Right cardiac atrium (tissue), 5 donors: ENCODE measurements at regions of chr10 and their contacts with region 1.

Region 1: DNA sequence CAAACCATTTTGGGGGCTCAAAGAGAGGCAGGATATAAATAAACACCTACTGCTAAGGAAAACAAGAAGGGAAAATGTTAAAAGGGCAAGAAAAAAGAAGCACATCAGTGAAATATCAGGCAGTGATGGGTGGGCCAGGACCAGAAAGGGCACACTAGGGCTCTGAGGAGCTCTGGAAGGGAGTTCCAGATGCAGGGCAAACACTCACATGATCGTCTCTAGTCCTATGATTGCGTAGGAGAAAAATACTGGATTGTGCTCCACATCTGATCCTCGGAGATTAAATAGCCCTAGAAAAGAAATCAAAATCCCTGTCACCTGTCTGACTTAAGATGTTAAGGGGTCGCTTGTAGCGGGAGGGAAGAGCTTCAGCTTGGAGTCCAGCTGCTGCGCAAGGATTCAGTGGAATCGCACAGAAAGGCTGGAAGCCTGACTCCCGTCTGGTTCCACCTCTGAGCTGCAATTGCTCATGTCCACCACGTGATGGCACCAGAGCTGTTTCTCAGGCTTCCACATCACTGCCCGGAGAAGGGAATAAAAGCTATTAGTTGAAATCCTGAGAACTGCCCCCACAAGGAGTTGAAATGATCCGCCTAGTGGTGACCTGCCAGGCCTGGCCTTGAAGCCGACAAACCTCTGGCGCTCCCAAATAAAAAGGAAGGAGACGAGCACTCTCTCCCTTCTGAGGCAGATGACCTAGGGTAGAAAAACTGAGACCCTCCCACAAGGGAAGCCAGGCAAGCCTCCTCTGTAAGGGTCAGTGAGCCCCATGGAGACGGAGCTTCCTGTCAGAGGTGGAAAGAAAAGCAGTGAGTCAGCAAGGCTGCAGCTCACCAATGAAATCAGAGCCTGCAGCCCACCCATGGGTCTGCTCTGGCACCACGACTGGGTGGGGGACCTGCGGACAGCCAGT is 39.2 kb downstream of the XPNPEP1 start:
- DNase-seq: peak; percentile 76 to 91 (median 85)
- ATAC-seq: peak; percentile 89 to 90
- H3K4me3 ChIP-seq: no peak overlapping the region
- H3K27ac ChIP-seq: peak overlapping the region; percentile 18
- H3K4me1 ChIP-seq: peaks cover 11% of the 10 kb centered on the region
- H3K27me3 ChIP-seq: no peaks in the 10 kb centered on the region

Region 2: GRCh38 chr10:109721453-109722064 is 162.6 kb before region 1 on chr10:
- intact Hi-C with region 1: no loop called
- DNase-seq: no peak
- ATAC-seq: no peak
- H3K4me3 ChIP-seq: no peak overlapping the region
- H3K27ac ChIP-seq: no peak overlapping the region
- H3K4me1 ChIP-seq: no peaks in the 10 kb centered on the region
- H3K27me3 ChIP-seq: no peaks in the 10 kb centered on the region

Region 3: GRCh38 chr10:109956454-109957091 is 72.5 kb after region 1 on chr10:
- intact Hi-C with region 1: loop called in 1 of 4 experiments (anchors 10 kb)
- DNase-seq: no peak
- ATAC-seq: peak; percentile 43 to 50
- H3K4me3 ChIP-seq: no peak overlapping the region
- H3K27ac ChIP-seq: no peak overlapping the region
- H3K4me1 ChIP-seq: no peaks in the 10 kb centered on the region
- H3K27me3 ChIP-seq: no peaks in the 10 kb centered on the region

Region 4: GRCh38 chr10:110088367-110089104 is 204.4 kb after region 1 on chr10:
- intact Hi-C with region 1: no loop called
- DNase-seq: no peak
- ATAC-seq: no peak
- H3K4me3 ChIP-seq: no peak overlapping the region
- H3K27ac ChIP-seq: no peak overlapping the region
- H3K4me1 ChIP-seq: peaks cover 4% of the 10 kb centered on the region
- H3K27me3 ChIP-seq: no peaks in the 10 kb centered on the region

Region 5: GRCh38 chr10:110101464-110102144 is 217.5 kb after region 1 on chr10:
- intact Hi-C with region 1: loop called in 1 of 4 experiments (anchors 10 kb)
- DNase-seq: no peak
- ATAC-seq: no peak
- H3K4me3 ChIP-seq: no peak overlapping the region
- H3K27ac ChIP-seq: no peak overlapping the region
- H3K4me1 ChIP-seq: peaks cover 4% of the 10 kb centered on the region
- H3K27me3 ChIP-seq: no peaks in the 10 kb centered on the region

Region 6: GRCh38 chr10:110129490-110129889 is 245.4 kb after region 1 on chr10:
- intact Hi-C with region 1: loop called in 2 of 4 experiments (anchors 10 kb)
- DNase-seq: no peak
- ATAC-seq: no peak
- H3K4me3 ChIP-seq: no peak overlapping the region
- H3K27ac ChIP-seq: no peak overlapping the region
- H3K4me1 ChIP-seq: no peaks in the 10 kb centered on the region
- H3K27me3 ChIP-seq: no peaks in the 10 kb centered on the region

Region 7: GRCh38 chr10:110203500-110204455 is 319.7 kb after region 1 on chr10:
- intact Hi-C with region 1: no loop called
- DNase-seq: no peak
- ATAC-seq: no peak
- H3K4me3 ChIP-seq: no peak overlapping the region
- H3K27ac ChIP-seq: no peak overlapping the region
- H3K4me1 ChIP-seq: no peaks in the 10 kb centered on the region
- H3K27me3 ChIP-seq: no peaks in the 10 kb centered on the region

Region 8: GRCh38 chr10:110279407-110279986 is 395.4 kb after region 1 on chr10:
- intact Hi-C with region 1: loop called in 3 of 4 experiments (anchors 10 kb)
- DNase-seq: peak in 2 of 3 donors; percentile 26 to 29
- ATAC-seq: peak; percentile 86 to 87
- H3K4me3 ChIP-seq: no peak overlapping the region
- H3K27ac ChIP-seq: no peak overlapping the region
- H3K4me1 ChIP-seq: peaks cover 1% of the 10 kb centered on the region
- H3K27me3 ChIP-seq: no peaks in the 10 kb centered on the region